Activated B cell treated with CpG ODN at 0.5 μM for 24 hours (primary cell): ENCODE measurements at regions of chr18 and their contacts with region 1.

Region 1: DNA sequence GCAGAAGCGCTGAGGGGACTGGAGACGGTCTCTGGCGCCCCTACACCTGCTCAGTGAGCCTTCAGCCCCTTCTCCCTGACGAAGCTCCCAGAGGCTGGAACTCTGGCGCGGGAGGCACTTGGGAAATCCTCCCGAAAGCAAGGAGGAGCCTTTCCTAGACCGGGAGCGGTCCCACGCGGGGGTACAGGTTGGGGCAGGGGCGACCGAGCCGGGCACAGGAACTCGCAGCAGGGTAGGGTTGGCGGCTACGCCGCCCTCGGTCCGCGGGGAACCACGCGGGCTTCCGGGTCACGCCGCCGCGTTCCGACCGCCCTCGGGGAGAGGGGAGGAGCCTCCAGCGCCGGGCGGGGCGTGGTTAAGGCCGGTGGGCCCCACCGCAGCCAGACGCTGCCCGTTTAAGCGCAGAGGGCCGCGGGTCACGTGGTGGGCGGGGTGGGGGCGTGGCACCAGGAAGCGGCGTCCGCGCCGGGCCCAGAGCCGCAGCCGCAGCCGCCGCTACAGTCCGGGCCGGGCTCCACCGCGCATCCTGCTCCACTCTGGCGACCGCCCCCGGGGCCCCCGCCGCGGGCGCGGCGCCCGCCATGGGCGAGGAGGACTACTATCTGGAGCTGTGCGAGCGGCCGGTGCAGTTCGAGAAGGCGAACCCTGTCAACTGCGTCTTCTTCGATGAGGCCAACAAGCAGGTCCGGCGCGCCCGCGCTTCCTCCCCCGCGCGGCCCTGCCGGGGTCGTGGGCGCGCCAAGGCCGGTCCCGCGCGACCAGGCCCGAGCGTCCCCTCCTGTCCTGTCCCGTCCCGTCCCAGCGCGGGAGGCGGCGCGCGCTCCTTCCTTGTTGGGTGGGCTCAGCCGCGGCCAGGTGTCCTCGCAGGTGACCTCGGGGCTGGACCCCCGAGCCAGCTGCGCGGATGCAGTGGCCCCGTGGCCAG is at the start of gene RMC1:
- DNase-seq: peak; percentile 100
- ATAC-seq: peak; percentile 89
- H3K4me3 Mint-ChIP-seq: peak within 1 kb of the TSS; percentile 93
- H3K27ac Mint-ChIP-seq: peak within 1 kb of the TSS; percentile 98
- H3K4me1 Mint-ChIP-seq: peaks cover 75% of the 10 kb centered on the region
- H3K27me3 Mint-ChIP-seq: no peaks in the 10 kb centered on the region
- CTCF ChIP-seq: no peak
- total RNA-seq, gene RMC1: 58.4 and 71.2 TPM in 2 replicates

Region 2: DNA sequence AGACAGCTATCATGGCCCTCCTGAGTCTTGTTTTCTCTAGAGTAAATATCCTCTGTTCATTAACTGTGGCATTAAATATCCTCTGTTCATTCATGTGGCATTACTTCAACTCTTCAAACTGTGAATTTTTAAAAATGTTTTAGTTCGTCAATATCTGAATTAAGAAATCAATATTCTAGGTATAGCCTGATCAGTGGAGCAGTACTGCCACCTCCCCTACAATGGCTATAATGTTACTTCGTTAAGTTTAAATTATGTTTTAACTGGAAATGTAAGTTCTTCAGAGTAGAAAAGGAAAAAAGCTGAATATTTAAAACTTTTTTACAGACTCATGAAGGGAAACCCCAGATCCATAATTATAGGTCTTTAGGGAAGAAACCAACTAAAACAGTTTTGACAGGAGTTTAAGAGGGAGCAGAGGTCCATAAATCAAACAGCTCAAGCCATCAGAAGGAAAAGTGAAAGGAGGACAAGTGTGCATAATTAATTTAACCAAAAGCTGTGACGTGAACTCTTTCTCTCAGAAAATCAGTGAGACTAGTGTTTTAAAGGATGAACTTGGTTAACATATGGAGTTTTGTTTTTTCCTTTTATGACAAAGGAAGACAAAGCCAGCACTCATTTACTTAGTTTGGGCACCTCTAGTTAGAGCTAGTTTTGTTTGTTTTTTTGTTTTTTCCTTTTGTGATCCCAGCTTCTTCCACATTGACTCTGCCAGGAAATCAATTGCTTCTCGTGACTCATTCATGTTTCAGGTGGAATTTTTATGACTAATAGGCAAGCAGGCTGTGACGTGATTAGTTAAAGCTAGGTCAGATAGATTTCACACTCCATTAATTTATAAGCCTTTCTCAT is 525.2 kb before region 1 on chr18:
- CTCF ChIA-PET with region 1: no interaction called
- POLR2A ChIA-PET with region 1: no interaction called
- intact Hi-C with region 1: loop called (anchors 5 kb)
- DNase-seq: no peak
- ATAC-seq: peak; percentile 73
- H3K4me3 Mint-ChIP-seq: peak overlapping the region; percentile 62
- H3K27ac Mint-ChIP-seq: peak overlapping the region; percentile 79
- H3K4me1 Mint-ChIP-seq: peaks cover 47% of the 10 kb centered on the region
- H3K27me3 Mint-ChIP-seq: no peaks in the 10 kb centered on the region
- CTCF ChIP-seq: no peak

Region 3: DNA sequence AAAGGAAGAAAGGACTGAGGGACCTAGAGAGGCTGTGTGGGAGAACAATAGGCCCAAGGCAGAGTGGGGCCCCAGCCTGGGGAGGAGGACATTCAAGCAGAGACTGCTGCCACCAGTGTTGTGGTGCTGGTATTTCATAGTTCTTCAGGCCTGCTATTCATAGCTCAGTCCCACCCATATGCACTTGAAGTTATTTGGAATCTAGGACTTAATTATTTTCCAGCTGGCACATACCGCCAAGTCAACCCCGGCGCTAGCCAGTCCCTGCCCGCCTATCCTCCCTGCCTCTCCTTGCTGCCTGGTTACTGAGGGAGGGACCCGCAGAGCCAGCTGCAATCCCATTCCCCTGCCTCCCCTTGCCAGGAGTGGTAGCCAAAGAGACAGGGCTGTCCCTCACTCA is 226.8 kb before region 1 on chr18:
- CTCF ChIA-PET with region 1: no interaction called
- POLR2A ChIA-PET with region 1: no interaction called
- intact Hi-C with region 1: no loop called
- DNase-seq: no peak
- ATAC-seq: no peak
- H3K4me3 Mint-ChIP-seq: no peak overlapping the region
- H3K27ac Mint-ChIP-seq: no peak overlapping the region
- H3K4me1 Mint-ChIP-seq: peaks cover 3% of the 10 kb centered on the region
- H3K27me3 Mint-ChIP-seq: no peaks in the 10 kb centered on the region
- CTCF ChIP-seq: no peak

Region 4: GRCh38 chr18:23356915-23357601 is 146.2 kb before region 1 on chr18:
- CTCF ChIA-PET with region 1: interaction called, 5 read pairs
- POLR2A ChIA-PET with region 1: interaction called, 6 read pairs
- intact Hi-C with region 1: loop called (anchors 10 kb)
- DNase-seq: no peak
- ATAC-seq: no peak
- H3K4me3 Mint-ChIP-seq: no peak overlapping the region
- H3K27ac Mint-ChIP-seq: no peak overlapping the region
- H3K4me1 Mint-ChIP-seq: peaks cover 33% of the 10 kb centered on the region
- H3K27me3 Mint-ChIP-seq: no peaks in the 10 kb centered on the region
- CTCF ChIP-seq: no peak

Region 5: GRCh38 chr18:23387265-23387664 is 116.0 kb before region 1 on chr18:
- CTCF ChIA-PET with region 1: no interaction called
- POLR2A ChIA-PET with region 1: no interaction called
- intact Hi-C with region 1: no loop called
- DNase-seq: no peak
- ATAC-seq: no peak
- H3K4me3 Mint-ChIP-seq: no peak overlapping the region
- H3K27ac Mint-ChIP-seq: no peak overlapping the region
- H3K4me1 Mint-ChIP-seq: peaks cover 18% of the 10 kb centered on the region
- H3K27me3 Mint-ChIP-seq: no peaks in the 10 kb centered on the region
- CTCF ChIP-seq: no peak

Region 6: GRCh38 chr18:23422672-23423418 is 80.5 kb before region 1 on chr18:
- CTCF ChIA-PET with region 1: interaction called, 3 read pairs
- POLR2A ChIA-PET with region 1: no interaction called
- intact Hi-C with region 1: loop called (anchors 1 kb)
- DNase-seq: peak; percentile 22
- ATAC-seq: peak; percentile 82
- H3K4me3 Mint-ChIP-seq: peak overlapping the region; percentile 25
- H3K27ac Mint-ChIP-seq: peak overlapping the region; percentile 73
- H3K4me1 Mint-ChIP-seq: peaks cover 34% of the 10 kb centered on the region
- H3K27me3 Mint-ChIP-seq: no peaks in the 10 kb centered on the region
- CTCF ChIP-seq: no peak

Region 7: DNA sequence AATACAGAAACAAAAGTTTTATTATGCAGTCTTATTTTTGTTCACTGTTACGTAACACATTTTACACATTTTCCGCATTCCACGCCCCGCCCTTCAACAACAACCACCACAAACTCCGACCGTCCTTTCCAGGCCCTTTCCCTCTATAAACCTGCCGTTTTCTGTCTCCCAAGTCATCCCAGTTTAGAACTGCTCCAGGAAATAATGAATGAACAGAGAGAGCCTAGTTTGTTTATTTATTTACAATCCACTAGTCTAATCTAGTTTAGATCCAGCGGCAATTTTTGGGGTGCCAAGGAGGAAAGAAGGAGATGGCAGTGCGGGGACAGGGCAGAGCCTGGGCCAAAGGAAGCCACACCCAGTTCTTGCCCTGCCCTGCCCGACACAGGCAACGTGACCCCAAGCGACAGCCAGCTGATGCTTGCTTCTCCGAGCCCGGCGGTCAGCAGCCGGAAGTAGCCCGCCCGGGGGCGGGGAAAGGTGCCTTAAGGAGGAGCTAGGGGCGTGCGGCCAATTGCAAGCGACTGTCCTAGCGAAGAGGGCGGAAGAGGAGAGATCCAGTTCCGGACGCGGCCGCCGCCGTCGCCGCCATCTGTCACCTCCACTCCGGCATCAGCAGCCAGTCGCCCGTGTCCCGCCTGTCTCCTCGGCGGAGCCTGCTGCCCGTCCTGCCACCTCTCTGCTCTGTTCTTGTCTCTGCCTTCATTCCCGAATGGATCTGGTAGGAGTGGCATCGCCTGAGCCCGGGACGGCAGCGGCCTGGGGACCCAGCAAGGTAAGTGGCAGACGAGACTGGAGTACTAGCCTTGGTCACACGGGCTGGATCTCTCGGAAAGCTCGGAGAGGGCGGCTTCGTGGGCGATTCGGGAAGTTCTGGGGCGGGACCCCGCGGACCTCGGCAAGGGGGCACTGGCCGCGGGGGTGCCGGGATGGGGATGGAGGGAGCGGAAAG is 50.3 kb before region 1 on chr18 and contains the start of gene RIOK3:
- CTCF ChIA-PET with region 1: interaction called, 3 read pairs
- POLR2A ChIA-PET with region 1: interaction called, 11 read pairs
- intact Hi-C with region 1: loop called (anchors 1 kb)
- DNase-seq: peak; percentile 91
- ATAC-seq: peak; percentile 97
- H3K4me3 Mint-ChIP-seq: peak within 1 kb of the TSS; percentile 99
- H3K27ac Mint-ChIP-seq: peak within 1 kb of the TSS; percentile 87
- H3K4me1 Mint-ChIP-seq: peaks cover 67% of the 10 kb centered on the region
- H3K27me3 Mint-ChIP-seq: no peaks in the 10 kb centered on the region
- CTCF ChIP-seq: no peak
- total RNA-seq, gene RIOK3: 90.4 and 92.4 TPM in 2 replicates

Region 8: GRCh38 chr18:23487738-23488570 is 15.3 kb before region 1 on chr18:
- CTCF ChIA-PET with region 1: interaction called, 28 read pairs
- POLR2A ChIA-PET with region 1: interaction called, 36 read pairs
- intact Hi-C with region 1: loop called (anchors 1 kb)
- DNase-seq: peak; percentile 29
- ATAC-seq: peak; percentile 81
- H3K4me3 Mint-ChIP-seq: peak overlapping the region; percentile 82
- H3K27ac Mint-ChIP-seq: peak overlapping the region; percentile 97
- H3K4me1 Mint-ChIP-seq: peaks cover 61% of the 10 kb centered on the region
- H3K27me3 Mint-ChIP-seq: no peaks in the 10 kb centered on the region
- CTCF ChIP-seq: no peak

Region 9: GRCh38 chr18:23586249-23587196 is 83.2 kb after region 1 on chr18 and contains the start of gene NPC1:
- CTCF ChIA-PET with region 1: interaction called, 8 read pairs
- POLR2A ChIA-PET with region 1: interaction called, 9 read pairs
- intact Hi-C with region 1: loop called (anchors 1 kb)
- DNase-seq: peak; percentile 94
- ATAC-seq: peak; percentile 88
- H3K4me3 Mint-ChIP-seq: peak within 1 kb of the TSS; percentile 91
- H3K27ac Mint-ChIP-seq: peak within 1 kb of the TSS; percentile 95
- H3K4me1 Mint-ChIP-seq: peaks cover 31% of the 10 kb centered on the region
- H3K27me3 Mint-ChIP-seq: no peaks in the 10 kb centered on the region
- CTCF ChIP-seq: peak; percentile 39
- total RNA-seq, gene NPC1: 31.9 and 36.5 TPM in 2 replicates